ENCODE measurements at regions of chr1 and their contacts with region 1.

Region 1: GRCh38 chr1:94819941-94820746 is at the start of gene SLC44A3:
- DNase-seq: peak; percentile 38
- CTCF ChIP-seq: no peak

Region 2: GRCh38 chr1:94045465-94046056 is 774.6 kb before region 1 on chr1:
- in situ Hi-C with region 1: loop called (anchors 10 kb)
- DNase-seq: peak; percentile 61
- CTCF ChIP-seq: peak; percentile 37

Region 3: DNA sequence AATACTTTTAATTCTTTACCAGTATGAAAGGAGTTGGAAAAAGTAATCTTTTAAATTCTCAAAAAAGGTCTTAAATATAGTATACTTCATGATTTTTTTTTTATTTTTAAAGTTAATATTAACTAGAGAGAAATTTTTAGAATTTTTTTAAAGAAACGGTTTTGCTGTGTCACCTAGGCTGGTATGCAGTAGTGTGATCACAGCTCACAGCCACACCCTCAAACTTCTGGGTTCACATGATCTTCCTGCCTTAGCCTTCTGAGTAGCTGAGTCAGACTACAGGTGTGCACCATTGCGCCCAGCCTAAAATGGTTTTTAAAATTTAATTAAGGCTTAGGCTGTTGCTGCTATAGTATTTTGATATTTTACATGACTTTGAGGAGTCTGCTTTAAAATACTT is 349.4 kb after region 1 on chr1:
- in situ Hi-C with region 1: no loop called
- DNase-seq: no peak
- CTCF ChIP-seq: no peak